MCF 10A (cell line): ENCODE measurements at regions of chr3 and their contacts with region 1.

Region 1: GRCh38 chr3:81472600-81473362 is 288.7 kb downstream of the GBE1 start:
- DNase-seq: no peak
- H3K4me3 Mint-ChIP-seq: no peak overlapping the region
- H3K27ac Mint-ChIP-seq: no peak overlapping the region
- H3K4me1 Mint-ChIP-seq: no peaks in the 10 kb centered on the region
- H3K27me3 Mint-ChIP-seq: no peaks in the 10 kb centered on the region
- CTCF ChIP-seq: no peak

Region 2: DNA sequence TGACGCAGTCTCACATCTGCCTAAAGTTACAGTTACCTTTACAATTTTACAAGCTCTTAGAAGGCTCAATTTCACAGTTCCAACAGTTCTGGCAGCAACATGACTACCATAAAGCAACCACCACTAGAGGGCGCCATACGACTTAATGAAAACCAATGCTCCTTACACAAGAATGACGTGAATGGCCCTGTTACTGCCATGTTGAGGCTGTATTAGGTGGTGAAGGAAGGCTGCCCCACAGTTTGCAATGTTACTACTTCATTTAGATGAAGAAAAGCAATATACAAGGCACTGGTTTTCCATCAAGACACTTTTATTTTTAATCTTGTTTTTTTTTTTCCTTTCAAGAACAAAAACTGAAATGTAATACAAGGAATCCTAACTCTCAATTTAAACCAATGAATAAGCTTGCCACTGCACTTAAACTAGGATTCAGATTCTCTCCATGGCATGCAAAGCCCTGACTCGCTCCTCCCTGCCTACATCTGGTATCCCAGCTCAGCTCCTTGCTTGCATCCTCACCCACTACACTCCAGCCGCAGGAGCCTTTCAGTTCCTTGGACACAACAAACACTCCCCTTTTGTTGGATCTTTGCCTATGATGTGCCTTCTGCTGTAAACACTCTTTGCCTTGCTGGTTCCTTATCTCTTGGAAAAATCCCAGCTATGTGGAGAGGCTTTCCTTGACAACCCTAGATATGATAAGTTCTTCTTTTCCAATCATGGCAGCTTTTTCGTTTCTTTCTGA is 17.9 kb after region 1 on chr3:
- CTCF ChIA-PET with region 1: interaction called, 15 read pairs
- POLR2A ChIA-PET with region 1: no interaction called
- intact Hi-C with region 1: no loop called
- DNase-seq: peak; percentile 88
- H3K4me3 Mint-ChIP-seq: no peak overlapping the region
- H3K27ac Mint-ChIP-seq: peak overlapping the region; percentile 16
- H3K4me1 Mint-ChIP-seq: peaks cover 7% of the 10 kb centered on the region
- H3K27me3 Mint-ChIP-seq: no peaks in the 10 kb centered on the region
- CTCF ChIP-seq: peak; percentile 73